Activated CD4-positive, alpha-beta T cell treated with anti-CD3 and anti-CD28 coated beads for 36 hours (primary cell): ENCODE measurements at regions of chr11 and their contacts with region 1.

Region 1: GRCh38 chr11:86116386-86116726 is 47.5 kb upstream of the PICALM start:
- DNase-seq: peak; percentile 52
- ATAC-seq: peak; percentile 95
- H3K4me3 Mint-ChIP-seq: peak overlapping the region; percentile 0
- H3K27ac Mint-ChIP-seq: peak overlapping the region; percentile 66
- H3K4me1 Mint-ChIP-seq: peaks cover 32% of the 10 kb centered on the region
- H3K27me3 Mint-ChIP-seq: peaks cover 7% of the 10 kb centered on the region

Region 2: GRCh38 chr11:86138958-86139357 is 22.6 kb after region 1 on chr11:
- CTCF ChIA-PET with region 1: interaction called, 3 read pairs
- POLR2A ChIA-PET with region 1: no interaction called
- intact Hi-C with region 1: loop called (anchors 2 kb)
- DNase-seq: peak; percentile 41
- ATAC-seq: peak; percentile 81
- H3K4me3 Mint-ChIP-seq: no peak overlapping the region
- H3K27ac Mint-ChIP-seq: peak overlapping the region; percentile 55
- H3K4me1 Mint-ChIP-seq: peaks cover 31% of the 10 kb centered on the region
- H3K27me3 Mint-ChIP-seq: no peaks in the 10 kb centered on the region

Region 3: DNA sequence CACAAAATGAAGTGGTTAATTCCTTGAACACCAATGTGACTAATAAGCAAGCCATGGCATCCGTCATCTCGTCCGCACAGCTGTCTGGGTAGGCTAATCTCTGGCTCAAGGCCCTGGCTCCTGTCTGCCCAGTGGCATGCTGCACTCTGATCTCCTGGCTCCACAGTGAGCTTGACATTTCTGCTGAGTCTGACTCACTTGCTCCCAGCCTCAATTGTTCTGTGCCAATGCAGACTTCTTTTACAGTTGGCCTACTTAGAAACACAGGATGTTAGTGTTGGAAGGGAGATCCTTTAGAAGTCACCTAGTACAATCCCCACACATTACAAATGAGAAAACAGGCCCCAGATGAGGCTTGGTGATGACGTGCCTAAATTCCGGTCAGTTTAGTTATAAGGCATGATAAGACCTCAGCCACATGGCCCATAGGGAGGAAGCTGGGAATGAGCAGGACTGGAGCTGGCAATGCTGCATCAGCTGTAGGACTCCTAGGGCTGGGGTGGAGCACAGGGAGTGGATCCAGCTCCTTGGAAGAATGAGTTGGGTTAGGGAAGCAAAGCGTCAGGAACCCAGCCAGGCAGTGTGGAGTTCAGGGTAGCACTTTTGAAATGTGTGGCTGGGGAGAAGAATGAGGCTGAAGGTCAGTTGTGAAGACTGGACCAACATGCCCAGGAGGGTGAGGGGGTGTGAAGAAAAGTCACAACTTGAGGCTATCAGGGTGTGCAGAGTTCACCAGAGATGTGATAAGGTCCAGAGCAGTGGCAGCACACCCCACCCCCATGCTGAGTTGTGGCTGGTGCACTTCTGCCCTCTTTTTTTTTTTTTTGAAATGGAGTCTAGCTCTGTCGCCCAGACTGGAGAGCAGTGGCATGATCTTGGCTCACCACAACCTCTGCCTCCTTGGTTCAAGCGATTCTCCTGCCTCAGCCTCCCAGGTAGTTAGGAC is 58.0 kb after region 1 on chr11:
- CTCF ChIA-PET with region 1: interaction called, 3 read pairs
- POLR2A ChIA-PET with region 1: interaction called, 4 read pairs
- intact Hi-C with region 1: loop called in 1 of 2 experiments (anchors 2 kb)
- DNase-seq: peak; percentile 30
- ATAC-seq: peak; percentile 18
- H3K4me3 Mint-ChIP-seq: no peak overlapping the region
- H3K27ac Mint-ChIP-seq: no peak overlapping the region
- H3K4me1 Mint-ChIP-seq: peaks cover 31% of the 10 kb centered on the region
- H3K27me3 Mint-ChIP-seq: no peaks in the 10 kb centered on the region

Region 4: DNA sequence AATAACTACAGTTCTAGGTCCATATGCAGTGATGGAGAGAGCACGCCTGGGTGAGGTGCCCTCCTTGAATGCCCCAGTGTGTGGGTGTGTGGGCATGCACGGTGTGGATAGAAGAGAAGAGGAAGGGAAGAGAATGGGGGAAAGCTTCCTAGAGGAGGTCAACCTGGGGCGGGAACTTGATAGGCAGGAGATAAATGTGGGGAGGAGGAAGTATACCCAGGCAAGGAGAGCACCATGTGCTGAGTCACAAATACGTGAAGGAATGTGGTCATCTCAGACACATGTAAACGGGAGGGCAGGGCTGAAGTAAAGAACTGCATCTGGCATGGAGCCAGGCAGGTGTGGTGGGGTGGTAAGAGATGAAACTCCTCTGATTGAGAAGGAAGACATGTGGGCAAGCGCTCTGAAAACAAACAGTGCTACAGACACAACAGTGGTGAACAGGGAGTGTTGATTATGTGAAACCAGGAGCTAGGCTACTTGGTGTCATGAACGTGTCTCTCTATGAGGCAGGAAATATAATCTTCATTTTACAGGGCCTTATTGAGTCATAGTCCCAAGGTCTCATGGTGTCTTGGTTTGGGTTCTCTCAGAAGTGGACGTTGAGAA is 66.7 kb after region 1 on chr11:
- CTCF ChIA-PET with region 1: interaction called, 3 read pairs
- POLR2A ChIA-PET with region 1: no interaction called
- intact Hi-C with region 1: loop called in 1 of 2 experiments (anchors 2 kb)
- DNase-seq: peak; percentile 89
- ATAC-seq: peak; percentile 84
- H3K4me3 Mint-ChIP-seq: no peak overlapping the region
- H3K27ac Mint-ChIP-seq: no peak overlapping the region
- H3K4me1 Mint-ChIP-seq: peaks cover 6% of the 10 kb centered on the region
- H3K27me3 Mint-ChIP-seq: no peaks in the 10 kb centered on the region

Region 5: GRCh38 chr11:86193297-86194095 is 77.1 kb after region 1 on chr11:
- CTCF ChIA-PET with region 1: interaction called, 13 read pairs
- POLR2A ChIA-PET with region 1: no interaction called
- intact Hi-C with region 1: no loop called
- DNase-seq: peak; percentile 74
- ATAC-seq: peak; percentile 99
- H3K4me3 Mint-ChIP-seq: peak overlapping the region; percentile 53
- H3K27ac Mint-ChIP-seq: peak overlapping the region; percentile 82
- H3K4me1 Mint-ChIP-seq: peaks cover 27% of the 10 kb centered on the region
- H3K27me3 Mint-ChIP-seq: peaks cover 6% of the 10 kb centered on the region

Region 6: GRCh38 chr11:86202013-86202336 is 85.6 kb after region 1 on chr11:
- CTCF ChIA-PET with region 1: interaction called, 4 read pairs
- POLR2A ChIA-PET with region 1: no interaction called
- intact Hi-C with region 1: loop called in 1 of 2 experiments (anchors 5 kb)
- DNase-seq: peak; percentile 39
- ATAC-seq: peak; percentile 94
- H3K4me3 Mint-ChIP-seq: no peak overlapping the region
- H3K27ac Mint-ChIP-seq: no peak overlapping the region
- H3K4me1 Mint-ChIP-seq: peaks cover 6% of the 10 kb centered on the region
- H3K27me3 Mint-ChIP-seq: peaks cover under 1% of the 10 kb centered on the region

Region 7: DNA sequence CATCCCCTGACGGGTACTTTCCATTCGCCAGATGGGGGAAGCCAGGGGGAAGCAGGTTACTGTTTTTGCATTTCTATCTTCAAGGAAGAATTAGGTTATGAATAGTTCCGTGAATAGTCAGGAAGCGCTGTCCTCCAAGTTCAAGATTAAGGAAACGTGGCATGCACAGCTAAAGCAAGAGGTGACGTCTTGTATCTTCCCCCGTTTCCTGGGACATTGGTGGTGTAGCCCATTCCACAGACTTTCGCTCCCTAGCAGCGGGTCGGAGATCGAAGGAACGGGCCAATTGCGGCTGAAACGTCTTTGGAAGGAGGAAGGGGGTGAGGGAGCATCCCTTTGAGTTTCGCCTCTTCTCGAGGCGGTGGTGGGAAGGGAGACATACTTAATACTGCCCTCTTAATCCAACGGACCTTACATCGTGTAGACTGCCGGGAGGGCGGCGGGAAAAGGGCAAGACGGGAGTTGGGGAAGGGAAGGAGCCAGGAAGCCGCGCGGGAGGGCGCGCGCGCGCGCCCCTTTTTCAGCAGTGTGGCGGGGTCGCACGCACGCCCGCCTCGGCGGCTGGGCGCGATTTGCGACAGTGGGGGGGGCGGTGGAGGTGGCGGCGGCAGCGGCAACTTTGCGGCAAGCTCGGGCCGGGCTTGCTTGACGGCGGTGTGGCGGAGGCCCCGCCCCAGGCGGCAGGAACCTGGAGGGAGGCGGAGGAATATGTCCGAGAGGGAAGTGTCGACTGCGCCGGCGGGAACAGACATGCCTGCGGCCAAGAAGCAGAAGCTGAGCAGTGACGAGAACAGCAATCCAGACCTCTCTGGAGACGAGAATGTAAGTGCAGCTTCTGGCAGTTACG is 128.4 kb after region 1 on chr11 and contains the start of gene EED:
- CTCF ChIA-PET with region 1: no interaction called
- POLR2A ChIA-PET with region 1: no interaction called
- intact Hi-C with region 1: no loop called
- DNase-seq: peak; percentile 97
- ATAC-seq: peak; percentile 79
- H3K4me3 Mint-ChIP-seq: no peak within 1 kb of the TSS
- H3K27ac Mint-ChIP-seq: no peak within 1 kb of the TSS
- H3K4me1 Mint-ChIP-seq: peaks cover 42% of the 10 kb centered on the region
- H3K27me3 Mint-ChIP-seq: peaks cover 3% of the 10 kb centered on the region
- total RNA-seq, gene EED: 90.3 to 127 TPM